ENCODE measurements at regions of chr7 and their contacts with region 1.

Region 1: GRCh38 chr7:25846722-25847121 is 305.3 kb upstream of the NFE2L3 start:
- DNase-seq: no peak
- H3K4me3 ChIP-seq: no peak overlapping the region
- H3K27ac ChIP-seq: no peak overlapping the region
- H3K4me1 ChIP-seq: peaks cover under 1% of the 10 kb centered on the region
- H3K27me3 ChIP-seq: no peaks in the 10 kb centered on the region
- CTCF ChIP-seq: no peak

Region 2: DNA sequence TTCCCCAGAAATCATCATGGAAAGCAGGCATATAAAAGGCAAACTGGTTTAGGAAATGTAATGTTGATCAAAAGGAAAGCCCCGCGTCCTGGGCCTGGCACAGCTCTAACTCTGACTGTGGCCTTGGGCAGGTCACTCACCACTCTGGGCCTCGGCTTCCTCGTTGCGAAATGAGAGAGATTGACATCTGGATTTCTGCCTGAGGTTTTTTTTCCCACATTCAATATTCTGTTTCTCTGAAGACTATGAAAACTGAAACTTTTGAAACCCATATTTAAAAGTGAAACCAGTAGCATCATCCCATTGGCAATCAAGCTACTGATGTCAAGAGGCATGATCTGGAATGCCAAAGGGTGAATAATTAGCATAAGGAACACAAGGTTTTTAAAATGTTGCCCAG is 248.8 kb before region 1 on chr7:
- dilution Hi-C with region 1: loop called (anchors 25 kb)
- DNase-seq: no peak
- H3K4me3 ChIP-seq: no peak overlapping the region
- H3K27ac ChIP-seq: no peak overlapping the region
- H3K4me1 ChIP-seq: no peaks in the 10 kb centered on the region
- H3K27me3 ChIP-seq: no peaks in the 10 kb centered on the region
- CTCF ChIP-seq: no peak